ENCODE measurements at regions of chr22 and their contacts with region 1.

Region 1: GRCh38 chr22:41780746-41781505 is 19.6 kb upstream of the CCDC134 start:
- DNase-seq: no peak
- H3K4me3 ChIP-seq: no peak overlapping the region
- H3K27me3 ChIP-seq: no peaks in the 10 kb centered on the region
- CTCF ChIP-seq: no peak

Region 2: DNA sequence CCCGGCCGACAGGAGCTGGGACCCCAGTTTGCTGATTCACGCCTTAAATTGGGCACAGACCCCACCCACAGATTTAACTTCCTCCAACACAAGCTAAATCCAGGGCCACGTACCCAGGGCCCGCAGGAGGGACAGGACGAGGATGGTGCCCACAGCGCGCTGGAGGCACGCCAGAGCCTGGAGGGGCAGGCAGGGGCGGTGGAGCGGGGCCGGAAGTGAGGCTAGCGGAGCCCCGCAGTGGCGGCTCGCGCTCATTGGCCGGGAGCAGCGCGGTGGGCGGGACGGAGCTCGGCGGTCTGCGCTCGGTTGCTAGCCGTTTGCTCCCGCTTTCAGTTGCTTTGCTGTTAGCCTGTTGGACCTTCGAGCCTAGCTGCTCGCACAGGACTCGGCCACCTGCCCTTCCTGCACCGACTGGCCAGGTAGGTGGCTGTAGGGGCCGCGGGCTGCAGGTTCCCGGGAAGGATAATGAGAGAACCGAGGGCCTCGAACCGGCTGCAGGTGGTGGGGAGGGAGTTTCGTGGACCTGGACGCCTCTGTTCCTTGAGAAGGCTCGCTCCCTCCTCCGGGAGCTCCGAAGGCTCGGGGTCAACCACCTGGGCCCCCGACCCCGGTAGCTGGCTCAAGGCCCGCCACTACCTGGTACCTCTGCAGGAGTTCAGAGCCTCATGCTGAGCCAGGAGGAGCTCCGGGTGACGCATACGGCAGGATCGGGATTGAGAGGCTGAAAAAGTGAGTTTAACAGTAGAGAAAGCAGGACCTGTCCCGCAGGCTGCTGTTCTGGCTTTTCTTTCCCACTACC is 19.6 kb after region 1 on chr22 and contains the start of gene CCDC134:
- CTCF ChIA-PET with region 1: interaction called, 10 read pairs
- POLR2A ChIA-PET with region 1: no interaction called
- DNase-seq: no peak
- H3K4me3 ChIP-seq: peak within 1 kb of the TSS; percentile 79
- H3K27me3 ChIP-seq: no peaks in the 10 kb centered on the region
- CTCF ChIP-seq: no peak
- polyA plus RNA-seq, gene CCDC134: 4.1 and 6.0 TPM in 2 replicates

Region 3: GRCh38 chr22:41908411-41909309 is 127.7 kb after region 1 on chr22:
- CTCF ChIA-PET with region 1: no interaction called
- POLR2A ChIA-PET with region 1: no interaction called
- DNase-seq: no peak
- H3K4me3 ChIP-seq: no peak overlapping the region
- H3K27me3 ChIP-seq: peaks cover 24% of the 10 kb centered on the region
- CTCF ChIP-seq: no peak